ENCODE measurements at regions of chr15 and their contacts with region 1.

Region 1: DNA sequence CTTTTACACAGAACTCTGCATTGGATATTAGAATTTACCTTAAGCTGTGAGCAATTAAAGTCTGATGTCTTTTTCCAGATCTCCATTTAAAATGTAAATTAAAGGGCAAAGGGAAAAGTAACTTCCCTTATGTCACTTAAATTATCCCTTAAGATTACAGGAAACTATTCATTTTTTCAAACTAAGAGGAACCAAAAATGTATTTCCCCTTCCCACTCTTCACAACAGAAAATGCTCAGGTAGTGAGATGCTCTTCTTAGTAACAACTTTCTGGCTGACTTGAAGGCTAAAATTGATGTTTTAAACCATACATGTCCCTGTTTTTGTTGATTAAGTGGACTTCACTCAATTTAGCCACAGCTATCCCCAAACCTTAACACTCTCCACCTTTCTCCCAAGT is 17.6 kb downstream of the RSL24D1 start:
- DNase-seq: no peak
- H3K4me3 ChIP-seq: no peak overlapping the region
- H3K27ac ChIP-seq: no peak overlapping the region
- H3K4me1 ChIP-seq: no peaks in the 10 kb centered on the region
- H3K27me3 ChIP-seq: no peaks in the 10 kb centered on the region
- CTCF ChIP-seq: no peak
- EP300 ChIP-seq: no peak
- POLR2A ChIP-seq: no peak
- RAD21 ChIP-seq: no peak

Region 2: GRCh38 chr15:55168329-55168974 is 10.7 kb before region 1 on chr15:
- CTCF ChIA-PET with region 1: interaction called, 29 read pairs
- POLR2A ChIA-PET with region 1: interaction called, 7 read pairs
- DNase-seq: peak; percentile 82 to 85
- H3K4me3 ChIP-seq: no peak overlapping the region
- H3K27ac ChIP-seq: no peak overlapping the region
- H3K4me1 ChIP-seq: no peaks in the 10 kb centered on the region
- H3K27me3 ChIP-seq: no peaks in the 10 kb centered on the region
- CTCF ChIP-seq: peak; percentile 27 to 88 (median 76)
- EP300 ChIP-seq: no peak
- POLR2A ChIP-seq: no peak
- RAD21 ChIP-seq: peak; percentile 73 to 80

Region 3: DNA sequence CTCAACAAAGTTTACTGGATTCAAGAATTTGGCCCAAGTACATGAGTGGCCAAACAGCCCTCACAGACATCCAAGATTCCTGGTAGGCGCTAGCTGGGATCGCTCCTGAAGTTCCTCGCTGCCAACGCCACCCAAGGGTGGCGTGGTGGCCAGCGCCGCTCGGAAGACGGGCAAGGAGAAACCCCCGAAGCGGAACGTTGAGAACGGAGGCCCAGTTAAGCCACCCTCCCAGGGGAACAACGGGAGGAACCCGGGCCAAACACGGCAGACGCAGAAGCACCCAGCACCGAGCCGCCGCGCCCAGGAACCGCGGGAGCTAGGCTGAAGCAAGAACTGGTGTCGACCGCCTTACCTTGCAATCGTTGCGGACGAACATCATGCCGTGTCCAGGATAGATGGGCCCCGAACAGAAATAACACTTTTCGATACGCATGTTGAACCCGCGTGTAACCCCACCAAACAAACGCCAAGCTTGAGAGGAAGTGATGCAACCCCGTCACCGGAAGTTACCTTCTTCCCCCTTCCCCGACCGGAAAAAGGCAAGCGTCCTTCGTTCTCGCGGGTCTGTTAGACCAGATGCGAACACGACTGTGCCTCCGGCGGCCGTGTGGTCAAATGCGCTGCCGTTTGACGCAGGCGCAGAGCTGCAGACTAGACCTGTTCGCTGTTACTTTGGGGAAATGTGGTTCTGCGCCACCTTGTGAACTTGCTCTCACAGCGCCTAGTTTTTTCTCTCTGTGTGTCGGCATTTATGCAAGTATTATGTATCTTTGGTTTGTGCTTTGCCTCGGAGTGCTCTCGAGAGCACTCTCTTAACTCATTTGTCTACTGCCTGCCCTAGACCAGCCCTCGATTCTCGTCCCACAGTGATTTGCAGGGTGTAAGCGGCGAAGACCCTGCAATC is 17.6 kb after region 1 on chr15 and contains the start of gene RSL24D1:
- CTCF ChIA-PET with region 1: interaction called, 6 read pairs
- POLR2A ChIA-PET with region 1: interaction called, 17 read pairs
- DNase-seq: peak; percentile 86 to 97
- H3K4me3 ChIP-seq: peak within 1 kb of the TSS; percentile 93 to 100 (median 99)
- H3K27ac ChIP-seq: peak within 1 kb of the TSS; percentile 97
- H3K4me1 ChIP-seq: peaks cover 0 to 4% (median 0%) of the 10 kb centered on the region in 4 experiments; a peak in 3 of 7 replicates
- H3K27me3 ChIP-seq: no peaks in the 10 kb centered on the region; a peak in 1 of 7 replicates
- CTCF ChIP-seq: peak in 1 of 3 experiments; percentile 59; a peak in 1 of 4 replicates
- EP300 ChIP-seq: no peak
- POLR2A ChIP-seq: peak; percentile 83 to 99
- RAD21 ChIP-seq: peak in 1 of 2 experiments; percentile 10; a peak in 1 of 4 replicates
- total RNA-seq, gene RSL24D1: 126 and 130 TPM in 2 replicates

Region 4: GRCh38 chr15:55241891-55242290 is 62.8 kb after region 1 on chr15:
- CTCF ChIA-PET with region 1: no interaction called
- POLR2A ChIA-PET with region 1: no interaction called
- DNase-seq: no peak
- H3K4me3 ChIP-seq: no peak overlapping the region
- H3K27ac ChIP-seq: no peak overlapping the region
- H3K4me1 ChIP-seq: no peaks in the 10 kb centered on the region
- H3K27me3 ChIP-seq: no peaks in the 10 kb centered on the region
- CTCF ChIP-seq: no peak
- EP300 ChIP-seq: no peak
- POLR2A ChIP-seq: no peak
- RAD21 ChIP-seq: no peak

Measured in H1 (cell line).